GM12878 (cell line): ENCODE measurements at regions of chr17 and their contacts with region 1.

Region 1: DNA sequence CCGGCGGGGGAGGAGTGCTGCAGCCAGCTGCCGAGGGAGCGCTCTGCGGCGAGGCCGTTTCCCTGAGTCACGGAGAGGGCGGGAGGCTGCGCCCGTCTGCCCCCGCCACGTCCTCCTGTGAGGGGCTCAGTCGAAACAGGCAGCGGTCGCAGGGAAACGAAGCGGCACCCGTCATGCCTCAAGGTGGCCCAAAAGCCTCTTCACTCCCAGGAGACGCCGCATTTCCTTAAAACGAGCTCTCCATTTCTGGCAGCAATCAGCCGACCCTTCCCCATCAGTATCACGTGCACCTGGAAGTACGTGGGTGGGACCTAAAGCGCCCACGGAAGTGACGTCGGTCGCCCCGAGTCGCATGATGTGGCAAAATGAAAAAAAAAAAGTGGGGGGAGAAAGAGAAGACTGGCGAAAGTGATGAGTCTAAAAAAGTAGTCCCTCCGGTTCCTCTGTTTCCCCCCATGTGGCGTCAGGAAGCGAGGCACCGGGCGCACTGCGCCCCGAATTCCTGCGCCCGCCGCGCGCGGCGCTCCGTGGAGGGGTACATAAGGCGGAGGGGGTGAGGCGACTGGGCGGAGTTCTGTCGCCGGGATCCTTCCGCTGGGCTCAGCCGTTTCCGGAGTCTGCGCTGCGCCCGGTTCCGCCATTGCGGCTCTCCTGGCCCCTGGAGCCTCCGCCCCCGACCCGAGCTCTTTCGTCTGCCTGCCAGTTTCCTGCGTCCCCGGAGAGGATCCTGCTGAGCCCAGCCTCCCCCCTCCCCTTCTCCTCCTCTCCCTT is at the start of gene CLTC:
- DNase-seq: peak; percentile 92
- ATAC-seq: peak; percentile 88
- H3K4me3 ChIP-seq: peak within 1 kb of the TSS; percentile 95
- H3K27ac ChIP-seq: peak within 1 kb of the TSS; percentile 99
- H3K4me1 ChIP-seq: peaks cover 9% of the 10 kb centered on the region; the same call in 1 of the 2 replicates
- H3K27me3 ChIP-seq: no peaks in the 10 kb centered on the region
- CTCF ChIP-seq: no peak
- EP300 ChIP-seq: peak; percentile 50 to 68; a peak in 2 of 4 replicates
- POLR2A ChIP-seq: peak; percentile 86
- RAD21 ChIP-seq: no peak
- polyA plus RNA-seq, gene CLTC: 93.0 to 94.3 TPM

Region 2: DNA sequence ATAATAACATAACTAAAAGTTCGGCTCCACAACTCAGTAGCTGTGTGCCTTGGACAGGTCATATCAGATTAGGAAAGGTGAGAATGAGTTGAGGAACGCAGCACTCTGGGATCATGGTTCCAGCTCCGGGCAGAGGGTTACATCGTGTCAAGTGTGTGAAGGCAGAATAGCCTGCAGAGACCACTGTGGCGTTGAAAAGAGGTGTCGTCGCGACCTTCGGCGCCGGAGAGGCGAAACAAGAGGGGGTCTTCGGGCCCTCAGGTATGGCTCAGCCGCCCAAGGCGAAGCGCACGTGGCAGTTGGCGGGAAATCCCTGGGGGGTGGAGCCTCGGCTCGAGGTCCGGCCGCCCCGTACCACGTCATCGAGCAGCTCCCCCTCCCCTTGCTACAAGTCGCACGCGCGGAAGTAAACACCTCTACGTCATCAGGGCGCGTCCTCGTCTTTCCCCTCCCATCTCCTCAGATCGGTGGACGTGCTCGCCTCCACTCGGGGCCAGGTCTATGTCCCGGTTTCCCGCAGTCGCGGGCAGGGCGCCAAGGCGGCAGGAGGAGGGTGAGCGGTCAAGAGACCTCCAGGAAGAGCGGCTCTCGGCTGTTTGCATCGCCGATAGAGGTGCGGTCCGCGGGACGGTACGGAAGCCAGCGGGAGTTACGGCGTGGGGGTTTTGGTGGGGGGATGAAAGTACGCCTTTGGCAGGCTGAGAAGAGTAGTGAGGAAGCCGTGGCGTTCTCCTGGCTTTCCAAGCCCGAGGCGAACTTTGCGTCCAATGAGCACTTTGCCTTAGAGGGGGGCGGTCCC is 54.1 kb before region 1 on chr17 and contains the start of gene DHX40:
- CTCF ChIA-PET with region 1: no interaction called
- POLR2A ChIA-PET with region 1: interaction called, 4 read pairs
- RAD21 ChIA-PET with region 1: interaction called, 3 read pairs
- SMC1A ChIA-PET with region 1: interaction called, 5 read pairs
- in situ Hi-C with region 1: no loop called
- intact Hi-C with region 1: loop called (anchors 2 kb)
- DNase-seq: peak; percentile 68
- ATAC-seq: peak; percentile 92
- H3K4me3 ChIP-seq: peak within 1 kb of the TSS; percentile 99
- H3K27ac ChIP-seq: peak within 1 kb of the TSS; percentile 69
- H3K4me1 ChIP-seq: peaks cover 3% of the 10 kb centered on the region
- H3K27me3 ChIP-seq: no peaks in the 10 kb centered on the region
- CTCF ChIP-seq: no peak
- EP300 ChIP-seq: peak in 1 of 2 experiments; percentile 39; a peak in 1 of 4 replicates
- POLR2A ChIP-seq: peak; percentile 91
- RAD21 ChIP-seq: no peak
- polyA plus RNA-seq, gene DHX40: 4.8 to 5.6 TPM

Region 3: DNA sequence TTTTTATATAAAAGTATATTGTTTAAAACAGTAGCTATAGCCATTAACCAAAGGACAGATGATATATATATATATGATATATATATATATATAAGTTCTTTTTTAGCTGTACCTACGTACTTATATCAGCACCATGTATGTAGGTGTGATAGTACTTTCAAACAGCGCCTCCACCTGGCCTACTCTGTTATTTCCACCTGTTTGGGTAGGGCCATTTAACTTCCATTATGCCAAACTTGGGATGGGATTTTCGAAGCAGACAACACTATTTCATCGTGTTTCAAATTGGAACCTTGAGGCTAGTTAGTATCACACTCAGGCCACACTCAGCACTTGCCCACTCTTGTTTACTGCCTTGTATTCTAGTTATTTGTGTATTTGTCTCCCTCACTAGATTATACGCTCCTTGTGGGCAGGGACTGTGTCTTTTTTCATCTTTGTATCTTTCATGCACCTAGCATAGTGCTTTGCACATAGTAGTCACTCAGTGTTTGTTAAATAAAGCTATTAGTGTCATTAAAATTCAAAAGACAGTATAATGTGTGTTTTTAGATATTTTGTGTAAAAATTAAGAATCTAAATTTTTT is 11.6 kb before region 1 on chr17:
- CTCF ChIA-PET with region 1: interaction called, 14 read pairs
- POLR2A ChIA-PET with region 1: interaction called, 3 read pairs
- RAD21 ChIA-PET with region 1: no interaction called
- SMC1A ChIA-PET with region 1: interaction called, 9 read pairs
- in situ Hi-C with region 1: no loop called
- intact Hi-C with region 1: no loop called
- DNase-seq: no peak
- ATAC-seq: 0 out of 3 replicates have a peak, but pooled peaks have one; percentile 37
- H3K4me3 ChIP-seq: no peak overlapping the region
- H3K27ac ChIP-seq: no peak overlapping the region
- H3K4me1 ChIP-seq: no peaks in the 10 kb centered on the region
- H3K27me3 ChIP-seq: no peaks in the 10 kb centered on the region
- CTCF ChIP-seq: peak; percentile 12 to 22 (median 14); a peak in 3 of 6 replicates
- EP300 ChIP-seq: no peak
- POLR2A ChIP-seq: no peak
- RAD21 ChIP-seq: 0 out of 2 replicates have a peak, but pooled peaks have one; percentile 15

Region 4: GRCh38 chr17:59634632-59635541 is 15.4 kb after region 1 on chr17:
- CTCF ChIA-PET with region 1: interaction called, 6 read pairs
- POLR2A ChIA-PET with region 1: interaction called, 111 read pairs
- RAD21 ChIA-PET with region 1: interaction called, 4 read pairs
- SMC1A ChIA-PET with region 1: interaction called, 11 read pairs
- in situ Hi-C with region 1: no loop called
- intact Hi-C with region 1: no loop called
- DNase-seq: no peak
- ATAC-seq: peak; percentile 59
- H3K4me3 ChIP-seq: no peak overlapping the region
- H3K27ac ChIP-seq: no peak overlapping the region
- H3K4me1 ChIP-seq: peaks cover 8% of the 10 kb centered on the region
- H3K27me3 ChIP-seq: no peaks in the 10 kb centered on the region
- CTCF ChIP-seq: no peak
- EP300 ChIP-seq: no peak
- POLR2A ChIP-seq: no peak
- RAD21 ChIP-seq: no peak

Region 5: DNA sequence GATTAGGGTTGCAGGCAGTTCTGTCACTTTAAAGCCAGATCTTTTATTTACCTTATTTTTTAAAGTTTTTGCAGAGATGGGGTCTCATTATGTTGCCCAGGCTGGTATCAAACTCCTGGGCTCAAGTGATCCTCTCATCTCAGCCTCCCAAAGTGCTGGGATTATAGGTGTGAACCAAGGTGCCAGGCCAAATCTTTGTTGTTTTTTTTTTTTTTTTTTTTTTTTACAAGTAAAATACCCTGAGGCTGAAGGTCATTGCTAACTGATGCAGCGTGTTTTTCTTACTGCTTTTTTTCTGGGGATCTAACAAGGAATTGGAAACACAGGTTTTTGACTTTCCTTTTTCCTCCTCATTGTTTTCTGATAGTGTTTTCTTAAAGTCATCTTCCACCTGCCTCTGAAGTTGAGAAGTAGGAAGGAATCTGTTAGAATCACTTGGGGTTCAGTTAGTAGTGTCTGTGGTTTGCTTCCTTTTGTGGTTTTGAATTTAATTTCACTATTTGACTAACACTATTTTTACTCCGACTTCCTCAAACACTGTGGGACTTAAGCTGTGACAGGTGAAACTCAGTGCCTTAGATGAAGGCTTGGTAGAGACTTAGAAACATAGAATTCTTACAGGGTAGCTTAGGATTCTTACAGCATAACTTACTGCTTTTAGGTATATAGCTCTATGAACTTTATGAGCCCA is 22.5 kb after region 1 on chr17:
- CTCF ChIA-PET with region 1: interaction called, 13 read pairs
- POLR2A ChIA-PET with region 1: interaction called, 111 read pairs
- RAD21 ChIA-PET with region 1: interaction called, 43 read pairs
- SMC1A ChIA-PET with region 1: interaction called, 27 read pairs
- in situ Hi-C with region 1: no loop called
- intact Hi-C with region 1: no loop called
- DNase-seq: peak; percentile 63
- ATAC-seq: peak; percentile 93
- H3K4me3 ChIP-seq: 0 out of 2 replicates have a peak overlapping the region, but pooled peaks have one; percentile 18
- H3K27ac ChIP-seq: 0 out of 2 replicates have a peak overlapping the region, but pooled peaks have one; percentile 28
- H3K4me1 ChIP-seq: peaks cover 22% of the 10 kb centered on the region
- H3K27me3 ChIP-seq: no peaks in the 10 kb centered on the region
- CTCF ChIP-seq: no peak
- EP300 ChIP-seq: peak; percentile 53 to 68; a peak in 3 of 4 replicates
- POLR2A ChIP-seq: no peak
- RAD21 ChIP-seq: no peak

Region 6: GRCh38 chr17:59668816-59669215 is 49.3 kb after region 1 on chr17:
- CTCF ChIA-PET with region 1: interaction called, 9 read pairs
- POLR2A ChIA-PET with region 1: interaction called, 23 read pairs
- RAD21 ChIA-PET with region 1: interaction called, 25 read pairs
- SMC1A ChIA-PET with region 1: interaction called, 70 read pairs
- in situ Hi-C with region 1: no loop called
- intact Hi-C with region 1: no loop called
- DNase-seq: no peak
- ATAC-seq: no peak
- H3K4me3 ChIP-seq: no peak overlapping the region
- H3K27ac ChIP-seq: peak overlapping the region; percentile 52; the same call in 1 of the 2 replicates
- H3K4me1 ChIP-seq: peaks cover 8% of the 10 kb centered on the region
- H3K27me3 ChIP-seq: no peaks in the 10 kb centered on the region
- CTCF ChIP-seq: no peak
- EP300 ChIP-seq: no peak
- POLR2A ChIP-seq: no peak
- RAD21 ChIP-seq: no peak

Region 7: GRCh38 chr17:59707114-59707970 is 87.9 kb after region 1 on chr17 and contains the starts of genes PTRH2 and VMP1:
- CTCF ChIA-PET with region 1: interaction called, 4 read pairs
- POLR2A ChIA-PET with region 1: interaction called, 4 read pairs
- RAD21 ChIA-PET with region 1: interaction called, 4 read pairs
- SMC1A ChIA-PET with region 1: interaction called, 9 read pairs
- in situ Hi-C with region 1: no loop called
- intact Hi-C with region 1: loop called (anchors 1 kb)
- DNase-seq: peak; percentile 98
- ATAC-seq: peak; percentile 96
- H3K4me3 ChIP-seq: peak within 1 kb of the TSS; percentile 84
- H3K27ac ChIP-seq: peak within 1 kb of the TSS; percentile 96
- H3K4me1 ChIP-seq: peaks cover 3% of the 10 kb centered on the region; the same call in 1 of the 2 replicates
- H3K27me3 ChIP-seq: no peaks in the 10 kb centered on the region
- CTCF ChIP-seq: no peak
- EP300 ChIP-seq: no peak
- POLR2A ChIP-seq: peak; percentile 91
- RAD21 ChIP-seq: no peak
- polyA plus RNA-seq, gene PTRH2: 128 to 156 TPM
- polyA plus RNA-seq, gene VMP1: 130 to 199 TPM